Gastrocnemius medialis (tissue), 4 donors: ENCODE measurements at regions of chr4 and their contacts with region 1.

Region 1: GRCh38 chr4:25113915-25114904 is 46.0 kb downstream of the SEPSECS start:
- DNase-seq: no peak
- ATAC-seq: no peak
- H3K4me3 ChIP-seq: no peak overlapping the region
- H3K27ac ChIP-seq: no peak overlapping the region
- H3K4me1 ChIP-seq: no peaks in the 10 kb centered on the region
- H3K27me3 ChIP-seq: no peaks in the 10 kb centered on the region
- CTCF ChIP-seq: no peak
- POLR2A ChIP-seq: no peak

Region 2: DNA sequence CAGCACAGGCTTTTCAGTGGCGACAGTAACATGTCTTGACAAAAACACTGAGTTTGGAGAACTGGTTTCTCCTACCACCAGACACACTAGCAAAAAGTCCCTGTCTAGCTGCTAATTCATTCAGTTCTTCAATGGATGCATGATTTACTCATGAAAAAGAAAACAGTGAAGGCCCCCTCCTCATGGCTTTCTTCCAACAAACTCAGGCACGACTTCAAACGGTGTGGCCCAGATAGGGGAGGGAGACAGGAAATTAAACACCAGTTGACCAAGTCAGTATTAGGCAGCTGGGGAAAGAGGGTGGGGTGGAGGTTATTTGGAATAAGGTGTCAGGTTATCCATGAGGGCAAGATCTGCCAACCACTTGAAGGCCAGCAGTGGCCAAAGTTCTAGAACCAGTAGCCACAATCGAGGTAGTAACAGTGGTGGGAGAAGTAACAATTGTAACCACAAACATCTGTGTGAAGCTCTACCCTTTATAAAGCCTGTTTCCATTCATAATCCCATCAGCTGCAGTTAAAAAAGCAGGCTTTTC is 14.1 kb before region 1 on chr4:
- in situ Hi-C with region 1: no loop called
- intact Hi-C with region 1: loop called (anchors 1 kb)
- DNase-seq: no peak
- ATAC-seq: no peak
- H3K4me3 ChIP-seq: no peak overlapping the region
- H3K27ac ChIP-seq: no peak overlapping the region
- H3K4me1 ChIP-seq: peaks cover 4 to 8% of the 10 kb centered on the region in 2 donors
- H3K27me3 ChIP-seq: peaks cover 7 to 14% (median 13%) of the 10 kb centered on the region in 3 donors
- CTCF ChIP-seq: no peak
- POLR2A ChIP-seq: no peak